Right ventricle myocardium superior (tissue), 1 donor: ENCODE measurements at regions of chr10 and their contacts with region 1.

Region 1: DNA sequence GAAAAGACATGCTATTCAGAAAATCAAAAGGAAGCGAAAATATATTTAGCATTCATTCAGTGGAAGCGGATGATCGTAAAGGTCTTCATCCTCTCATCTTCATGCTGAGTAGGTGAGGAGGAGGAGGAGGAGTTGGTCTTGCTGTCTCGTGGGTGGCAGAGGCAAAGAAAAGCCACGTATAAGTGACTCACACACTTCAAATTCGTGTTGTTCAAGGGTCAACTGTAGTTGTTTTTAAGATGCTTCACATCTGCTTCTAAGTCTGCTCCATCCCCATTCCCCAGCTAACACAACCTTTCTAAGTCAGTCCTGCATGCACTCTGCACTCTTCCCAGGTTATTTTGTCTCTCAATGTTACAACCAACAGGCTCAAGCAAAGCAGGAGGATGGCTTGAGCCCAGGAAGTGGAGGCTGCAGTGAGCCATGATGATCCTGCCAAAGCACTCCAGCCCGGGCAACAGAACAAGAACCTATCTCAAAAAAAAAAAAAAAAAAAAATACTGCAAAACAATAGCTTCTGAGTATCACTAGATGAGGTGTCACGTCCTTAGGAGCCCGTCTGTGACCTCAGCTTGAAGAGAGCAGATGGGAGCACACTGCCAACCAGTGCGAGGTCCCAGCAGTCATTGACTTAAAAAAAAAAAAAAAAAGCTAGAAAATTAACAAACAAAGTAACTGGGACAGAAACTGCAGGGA is 70.5 kb downstream of the SFMBT2 start:
- DNase-seq: peak; percentile 50
- ATAC-seq: peak; percentile 90

Region 2: GRCh38 chr10:7275761-7276440 is 64.4 kb before region 1 on chr10:
- intact Hi-C with region 1: loop called (anchors 10 kb)
- DNase-seq: peak; percentile 45
- ATAC-seq: peak; percentile 75